Panc1 (cell line): ENCODE measurements at regions of chr17 and their contacts with region 1.

Region 1: GRCh38 chr17:31467502-31468256 is 76.2 kb downstream of the RAB11FIP4 start:
- DNase-seq: no peak
- ATAC-seq: no peak
- H3K4me3 ChIP-seq: no peak overlapping the region
- H3K27ac ChIP-seq: no peak overlapping the region
- H3K4me1 ChIP-seq: no peaks in the 10 kb centered on the region
- H3K27me3 ChIP-seq: no peaks in the 10 kb centered on the region
- CTCF ChIP-seq: no peak

Region 2: DNA sequence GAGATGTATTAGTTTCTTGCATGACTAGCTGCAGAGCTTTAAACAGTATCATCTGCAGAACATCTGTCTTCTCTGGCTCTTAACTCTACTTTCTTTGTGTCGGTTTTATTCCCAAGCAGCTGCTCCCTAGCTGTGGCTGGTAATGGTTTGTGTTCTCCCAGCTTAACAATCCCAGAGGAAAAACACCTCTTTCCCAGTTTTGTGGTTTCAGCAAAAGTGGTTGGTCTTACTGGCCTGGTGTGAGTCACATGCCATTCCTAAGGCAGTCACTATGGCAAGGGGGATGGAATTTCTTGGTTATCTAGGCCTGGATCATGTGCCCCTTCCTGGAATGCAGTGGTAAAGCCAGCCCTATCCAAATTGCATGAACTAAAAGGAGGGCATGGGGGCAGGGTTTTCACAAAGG is 198.1 kb before region 1 on chr17:
- CTCF ChIA-PET with region 1: no interaction called
- POLR2A ChIA-PET with region 1: no interaction called
- in situ Hi-C with region 1: no loop called
- intact Hi-C with region 1: no loop called
- DNase-seq: peak; percentile 24
- ATAC-seq: peak; percentile 97
- H3K4me3 ChIP-seq: no peak overlapping the region
- H3K27ac ChIP-seq: no peak overlapping the region; the same call in 1 of the 2 replicates
- H3K4me1 ChIP-seq: peaks cover 9% of the 10 kb centered on the region; the same call in 1 of the 2 replicates
- H3K27me3 ChIP-seq: no peaks in the 10 kb centered on the region
- CTCF ChIP-seq: no peak

Region 3: DNA sequence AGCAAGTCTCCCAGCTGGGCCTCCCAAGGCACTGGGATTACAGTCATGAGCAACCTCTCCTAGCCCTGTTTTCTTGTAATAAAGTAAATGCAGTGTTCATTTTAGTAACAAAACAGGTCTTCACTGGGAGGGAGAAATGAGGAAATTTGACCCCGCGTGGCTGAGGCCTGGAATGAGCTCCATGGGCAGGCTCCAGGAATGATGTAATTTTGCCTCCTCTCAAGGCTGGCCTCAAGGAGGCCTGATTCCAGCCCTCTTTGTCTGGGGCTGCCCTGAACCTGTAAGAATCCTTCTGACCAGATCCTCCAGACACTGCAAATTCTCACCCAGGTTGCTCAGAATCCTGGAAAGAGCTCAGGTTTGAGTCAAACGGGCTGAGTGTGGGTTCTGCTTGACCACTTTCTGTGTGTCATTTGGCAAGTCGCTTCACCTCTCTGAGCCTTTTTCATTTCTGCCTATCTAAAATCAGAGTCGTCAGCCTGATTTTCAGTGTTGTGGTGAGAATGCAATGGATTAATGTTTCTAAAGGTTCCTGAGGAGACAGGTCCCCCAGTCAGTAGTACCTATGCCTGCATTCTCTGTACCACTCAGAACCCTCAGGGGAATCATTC is 19.1 kb before region 1 on chr17:
- CTCF ChIA-PET with region 1: no interaction called
- POLR2A ChIA-PET with region 1: interaction called, 11 read pairs
- in situ Hi-C with region 1: no loop called
- intact Hi-C with region 1: no loop called
- DNase-seq: no peak
- ATAC-seq: no peak; the same call in 1 of the 2 replicates
- H3K4me3 ChIP-seq: no peak overlapping the region
- H3K27ac ChIP-seq: no peak overlapping the region
- H3K4me1 ChIP-seq: no peaks in the 10 kb centered on the region
- H3K27me3 ChIP-seq: no peaks in the 10 kb centered on the region
- CTCF ChIP-seq: no peak

Region 4: GRCh38 chr17:31549525-31550388 is 82.1 kb after region 1 on chr17:
- CTCF ChIA-PET with region 1: no interaction called
- POLR2A ChIA-PET with region 1: no interaction called
- in situ Hi-C with region 1: no loop called
- intact Hi-C with region 1: no loop called
- DNase-seq: peak; percentile 83
- ATAC-seq: peak; percentile 94
- H3K4me3 ChIP-seq: peak overlapping the region; percentile 73 to 88
- H3K27ac ChIP-seq: peak overlapping the region; percentile 93
- H3K4me1 ChIP-seq: 0 out of 2 replicates have a peak, but pooled peaks cover 5% of the 10 kb centered on the region
- H3K27me3 ChIP-seq: no peaks in the 10 kb centered on the region
- CTCF ChIP-seq: no peak